Common myeloid progenitor, CD34-positive (primary cell): ENCODE measurements at regions of chr6 and their contacts with region 1.

Region 1: DNA sequence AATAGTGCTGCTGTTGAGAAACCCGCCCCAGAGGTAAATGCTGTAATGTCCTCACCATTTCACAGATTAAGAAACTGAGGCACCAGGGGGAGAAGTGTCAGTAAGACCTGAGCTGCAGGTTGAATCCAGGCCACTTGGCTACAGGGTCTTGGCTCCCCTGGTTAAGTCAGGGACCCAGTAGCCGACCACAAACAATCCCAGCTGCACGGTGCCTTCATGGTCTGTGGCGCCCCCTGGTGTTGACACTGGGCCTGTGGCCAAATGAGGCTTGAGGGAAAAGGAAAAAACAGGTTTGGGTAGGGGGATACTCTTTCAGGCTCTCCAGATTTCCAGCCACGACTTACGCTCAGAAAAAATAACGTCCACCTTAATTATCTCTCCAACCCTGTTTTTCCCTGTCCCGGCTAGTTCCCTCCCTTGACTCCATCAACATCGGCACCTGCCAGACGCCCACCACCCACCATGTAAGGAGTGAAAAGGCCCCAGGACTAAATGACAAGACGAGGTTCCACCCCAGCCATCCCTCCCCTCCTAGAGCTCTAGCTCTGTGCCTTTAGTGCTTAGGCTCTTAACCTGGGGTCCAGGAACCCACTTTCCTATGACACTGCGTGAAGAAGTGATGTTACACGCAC is 47.7 kb upstream of the POLR1H start:
- DNase-seq: peak; percentile 37 to 63 (median 44)
- H3K4me3 ChIP-seq: no peak overlapping the region
- H3K27ac ChIP-seq: no peak overlapping the region
- H3K4me1 ChIP-seq: no peaks in the 10 kb centered on the region
- H3K27me3 ChIP-seq: peaks cover 0 to 13% (median 2%) of the 10 kb centered on the region in 5 experiments

Region 2: GRCh38 chr6:29989211-29989610 is 24.2 kb before region 1 on chr6:
- CTCF ChIA-PET with region 1: interaction called, 10 read pairs
- POLR2A ChIA-PET with region 1: no interaction called
- DNase-seq: no peak
- H3K4me3 ChIP-seq: no peak overlapping the region
- H3K27ac ChIP-seq: no peak overlapping the region
- H3K4me1 ChIP-seq: peaks cover 0 to 6% (median 2%) of the 10 kb centered on the region in 4 experiments
- H3K27me3 ChIP-seq: peaks cover 0 to 3% (median 0%) of the 10 kb centered on the region in 5 experiments

Region 3: GRCh38 chr6:30000156-30000791 is 13.1 kb before region 1 on chr6:
- CTCF ChIA-PET with region 1: no interaction called
- POLR2A ChIA-PET with region 1: no interaction called
- DNase-seq: no peak
- H3K4me3 ChIP-seq: no peak overlapping the region
- H3K27ac ChIP-seq: no peak overlapping the region
- H3K4me1 ChIP-seq: no peaks in the 10 kb centered on the region
- H3K27me3 ChIP-seq: peaks cover 0 to 9% (median 2%) of the 10 kb centered on the region in 5 experiments